ENCODE measurements at regions of chr1 and their contacts with region 1.

Region 1: DNA sequence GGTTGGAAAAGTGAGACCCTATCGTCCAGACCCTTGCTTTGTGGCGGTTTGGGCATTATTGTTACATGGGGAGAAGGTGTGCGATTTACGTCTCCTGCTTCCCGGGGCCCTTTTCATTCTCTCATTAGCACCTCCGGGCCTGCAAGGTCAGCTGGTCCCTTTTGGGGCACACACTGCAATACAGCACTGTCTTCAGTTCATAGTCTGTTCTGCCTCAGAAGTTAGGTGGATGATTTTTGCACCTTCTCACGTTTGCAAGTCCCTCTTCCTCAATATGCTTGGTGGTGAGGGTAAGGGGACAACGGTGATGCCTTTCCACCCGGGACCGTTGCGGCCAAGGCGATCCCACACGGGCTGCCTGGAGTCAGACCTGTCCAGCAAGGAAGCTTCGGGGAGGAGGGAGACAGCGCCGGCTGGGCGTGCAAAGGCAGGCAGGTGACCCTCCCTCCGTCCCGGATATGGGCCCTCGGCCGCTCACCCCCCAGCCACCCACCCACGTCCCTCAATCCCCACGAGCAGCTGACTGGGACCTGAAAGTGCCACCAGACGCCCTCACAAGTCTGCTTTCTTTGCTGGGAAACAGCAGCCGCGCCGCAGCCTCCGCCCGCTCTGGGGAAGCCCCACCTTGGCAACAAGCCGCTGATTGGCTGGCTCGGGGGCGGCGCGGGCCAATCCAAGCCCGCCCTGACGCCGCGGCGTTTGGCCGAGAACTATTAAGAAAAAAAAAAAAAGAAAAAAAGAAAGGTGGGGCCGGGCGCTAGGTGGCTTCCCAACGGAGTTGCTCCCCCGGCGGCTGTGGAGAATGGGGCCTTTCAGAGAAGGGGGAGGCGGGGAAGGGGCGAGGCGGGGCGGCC is 21.7 kb downstream of the BTG2 start:
- DNase-seq: peak; percentile 95
- ATAC-seq: peak; percentile 86
- H3K4me3 Mint-ChIP-seq: peak overlapping the region; percentile 74
- H3K27ac Mint-ChIP-seq: peak overlapping the region; percentile 90
- H3K4me1 Mint-ChIP-seq: peaks cover 50% of the 10 kb centered on the region
- H3K27me3 Mint-ChIP-seq: peaks cover 3% of the 10 kb centered on the region

Region 2: DNA sequence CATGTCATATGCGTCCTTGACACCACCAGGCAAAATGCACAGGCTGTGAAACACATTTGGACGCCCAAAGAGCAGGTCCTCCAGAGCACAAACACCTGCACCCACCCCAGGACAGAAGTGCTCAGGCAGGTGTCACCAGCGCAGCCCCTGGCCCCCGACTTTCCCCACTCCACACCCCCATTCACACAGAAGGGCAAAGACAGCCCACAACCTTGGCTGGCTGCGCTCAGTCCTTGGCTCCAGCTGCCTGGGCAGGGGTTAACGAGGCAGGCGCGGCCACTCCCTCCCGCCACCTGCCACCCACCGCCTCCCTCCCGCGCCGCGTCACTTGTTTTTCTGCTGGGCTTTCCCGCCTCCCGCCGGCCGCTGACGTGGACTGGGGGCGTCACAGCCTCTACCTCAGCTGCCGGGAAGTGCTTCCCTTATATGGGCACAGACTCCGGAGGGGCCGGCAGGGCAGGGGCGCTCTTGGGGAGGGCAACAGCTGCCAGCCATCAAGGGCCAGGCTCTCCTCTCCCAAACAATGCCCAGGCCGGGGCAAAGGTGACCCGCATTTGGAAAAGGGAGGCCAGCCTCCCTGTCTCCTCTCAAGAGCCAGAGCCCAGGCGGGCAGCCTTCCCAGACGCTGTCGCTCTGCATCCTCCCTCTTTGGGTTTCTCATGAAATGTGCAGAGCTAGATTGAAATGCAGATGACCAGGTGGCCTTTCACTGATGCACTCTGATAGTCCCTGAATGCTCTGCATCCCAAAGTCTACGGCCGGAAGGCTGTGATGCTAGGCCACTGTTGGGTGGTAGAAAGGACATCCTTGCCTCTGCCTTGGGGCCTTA is 36.6 kb before region 1 on chr1:
- POLR2A ChIA-PET with region 1: interaction called, 159 read pairs
- DNase-seq: peak; percentile 94
- ATAC-seq: peak; percentile 46
- H3K4me3 Mint-ChIP-seq: peak overlapping the region; percentile 82
- H3K27ac Mint-ChIP-seq: peak overlapping the region; percentile 98
- H3K4me1 Mint-ChIP-seq: peaks cover 60% of the 10 kb centered on the region
- H3K27me3 Mint-ChIP-seq: no peaks in the 10 kb centered on the region

Region 3: DNA sequence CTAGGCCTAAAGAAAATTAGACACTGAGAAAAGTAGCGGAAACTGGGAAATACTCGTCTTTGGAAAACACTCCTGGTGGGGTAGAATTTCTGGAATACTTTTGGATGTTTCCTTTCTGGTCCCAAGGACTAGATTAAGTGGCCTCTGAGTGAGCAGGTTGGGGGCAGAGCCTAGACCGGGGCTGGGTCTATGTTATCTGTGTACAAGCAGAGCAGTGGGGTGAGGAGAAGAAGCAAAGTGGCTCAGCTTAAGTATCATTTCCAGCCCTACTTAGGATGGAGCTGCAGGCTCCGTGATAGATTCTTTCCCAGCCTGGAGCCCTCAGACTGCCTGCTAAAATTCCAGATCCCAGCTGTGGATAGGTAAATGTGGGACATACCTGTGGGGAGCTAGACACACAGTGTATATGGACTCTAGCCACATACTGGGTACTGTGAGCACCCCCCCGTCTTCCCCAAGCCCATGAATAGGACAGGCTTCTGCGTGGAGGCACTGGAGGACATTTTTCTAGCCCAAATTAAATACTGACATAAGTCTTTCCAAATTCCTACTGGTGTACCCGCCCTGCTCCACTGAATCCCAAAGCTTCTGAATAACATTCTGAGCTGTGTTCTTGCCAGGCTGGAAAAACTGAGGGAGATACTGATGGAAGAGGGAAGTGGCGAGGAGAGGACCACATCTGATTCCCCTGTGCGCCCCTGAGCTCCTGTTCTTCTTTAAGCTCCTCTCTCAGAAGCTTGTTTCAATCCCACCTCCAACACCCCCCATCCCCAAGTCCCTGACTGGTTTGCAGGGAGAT is 17.1 kb after region 1 on chr1:
- POLR2A ChIA-PET with region 1: no interaction called
- DNase-seq: no peak
- ATAC-seq: no peak
- H3K4me3 Mint-ChIP-seq: no peak overlapping the region
- H3K27ac Mint-ChIP-seq: no peak overlapping the region
- H3K4me1 Mint-ChIP-seq: peaks cover 8% of the 10 kb centered on the region
- H3K27me3 Mint-ChIP-seq: peaks cover 26% of the 10 kb centered on the region

Measured in activated naive CD8-positive, alpha-beta T cell treated with anti-CD3 and anti-CD28 coated beads, Interleukin-2, amount 10 ng/mL, durations not matched to agents 7 days and 5 days (primary cell).